Right cardiac atrium (tissue), 5 donors: ENCODE measurements at regions of chr1 and their contacts with region 1.

Region 1: GRCh38 chr1:204377795-204378608 is 18.3 kb upstream of the PLEKHA6 start:
- DNase-seq: peak; percentile 34 to 66 (median 65)
- ATAC-seq: peak; percentile 50 to 61
- H3K4me3 ChIP-seq: peak overlapping the region; percentile 49
- H3K27ac ChIP-seq: no peak overlapping the region
- H3K4me1 ChIP-seq: no peaks in the 10 kb centered on the region
- H3K27me3 ChIP-seq: no peaks in the 10 kb centered on the region

Region 2: GRCh38 chr1:203861379-203862184 is 516.4 kb before region 1 on chr1 and contains the start of gene SNRPE:
- intact Hi-C with region 1: loop called in 1 of 4 experiments (anchors 10 kb)
- DNase-seq: peak; percentile 96 to 98 (median 97)
- ATAC-seq: peak; percentile 97 to 99
- H3K4me3 ChIP-seq: peak within 1 kb of the TSS; percentile 69
- H3K27ac ChIP-seq: peak within 1 kb of the TSS; percentile 10
- H3K4me1 ChIP-seq: no peaks in the 10 kb centered on the region
- H3K27me3 ChIP-seq: no peaks in the 10 kb centered on the region
- total RNA-seq, gene SNRPE: 48.7 to 59.7 (median 56.1) TPM

Region 3: DNA sequence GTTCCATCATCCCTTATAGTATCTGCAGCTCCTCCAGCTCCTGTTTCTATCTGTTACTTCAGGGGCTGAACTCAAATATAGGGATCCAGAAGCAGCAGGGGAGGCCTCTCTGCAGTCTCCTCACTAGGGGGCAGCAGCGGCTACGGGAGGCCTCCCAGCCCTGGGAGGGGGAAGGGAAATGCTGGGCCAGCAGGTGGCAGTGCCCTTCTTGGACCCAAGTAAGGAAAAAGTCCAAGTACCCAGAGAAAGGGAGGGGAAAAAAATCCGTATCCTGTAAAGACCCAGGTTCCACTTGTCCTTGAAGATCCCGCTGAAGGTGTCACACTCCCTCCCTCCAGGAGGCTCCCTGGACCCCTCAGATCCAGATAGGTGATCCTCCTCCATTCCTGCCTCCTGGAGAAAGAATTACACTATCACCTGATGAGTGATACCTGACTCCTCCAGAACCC is 957.7 kb after region 1 on chr1:
- intact Hi-C with region 1: no loop called
- DNase-seq: peak; percentile 69 to 88 (median 86)
- ATAC-seq: peak; percentile 70 to 79
- H3K4me3 ChIP-seq: no peak overlapping the region
- H3K27ac ChIP-seq: no peak overlapping the region
- H3K4me1 ChIP-seq: no peaks in the 10 kb centered on the region
- H3K27me3 ChIP-seq: no peaks in the 10 kb centered on the region